ENCODE measurements at regions of chr1 and their contacts with region 1.

Region 1: GRCh38 chr1:40338745-40339424 is 21.8 kb upstream of the COL9A2 start:
- DNase-seq: peak; percentile 79
- H3K4me3 Mint-ChIP-seq: no peak overlapping the region
- H3K27ac Mint-ChIP-seq: no peak overlapping the region
- H3K4me1 Mint-ChIP-seq: peaks cover 6% of the 10 kb centered on the region
- H3K27me3 Mint-ChIP-seq: peaks cover 18% of the 10 kb centered on the region
- CTCF ChIP-seq: peak; percentile 98

Region 2: DNA sequence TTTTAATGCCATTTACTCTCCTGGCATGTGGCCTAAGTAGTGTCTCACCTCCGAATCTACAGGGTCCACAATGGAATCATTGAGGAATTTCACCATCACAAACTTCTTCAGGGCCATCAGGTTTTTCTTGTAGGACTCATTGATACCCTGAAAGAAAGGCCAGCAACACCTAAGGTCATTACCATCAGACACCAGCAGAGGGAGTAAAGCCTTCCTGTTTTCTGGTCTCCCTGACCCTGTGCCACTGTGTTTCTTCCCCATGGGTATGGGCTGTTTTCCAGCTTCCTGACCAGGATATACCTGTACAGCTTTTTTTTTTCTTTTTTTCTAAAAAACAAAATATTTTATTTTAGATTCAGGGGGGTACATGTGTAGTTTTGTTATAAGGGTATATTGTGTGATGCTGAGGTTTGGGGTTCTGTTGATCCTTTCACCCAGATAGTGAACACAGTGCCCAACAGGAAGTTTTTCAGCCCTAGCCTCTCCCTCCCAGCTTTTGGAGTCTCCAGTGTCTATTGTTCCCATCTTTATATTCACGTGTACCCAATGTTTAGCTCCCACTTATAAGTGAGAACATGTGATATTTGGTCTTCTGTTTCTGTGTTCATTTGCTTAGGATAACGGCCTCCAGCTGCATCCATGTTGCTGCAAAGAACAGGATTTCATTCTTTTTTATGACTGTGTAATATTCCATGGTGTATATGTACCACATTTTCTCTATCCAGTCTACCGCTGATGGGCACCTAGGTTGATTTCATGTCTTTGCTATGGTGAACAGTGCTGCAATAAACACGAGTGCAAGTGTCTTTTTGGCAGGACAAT is 260.2 kb before region 1 on chr1:
- CTCF ChIA-PET with region 1: interaction called, 40 read pairs
- POLR2A ChIA-PET with region 1: no interaction called
- intact Hi-C with region 1: no loop called
- DNase-seq: peak; percentile 79
- H3K4me3 Mint-ChIP-seq: no peak overlapping the region
- H3K27ac Mint-ChIP-seq: no peak overlapping the region
- H3K4me1 Mint-ChIP-seq: peaks cover 13% of the 10 kb centered on the region
- H3K27me3 Mint-ChIP-seq: no peaks in the 10 kb centered on the region
- CTCF ChIP-seq: peak; percentile 65

Region 3: GRCh38 chr1:40153073-40153770 is 185.7 kb before region 1 on chr1:
- CTCF ChIA-PET with region 1: interaction called, 182 read pairs
- POLR2A ChIA-PET with region 1: interaction called, 8 read pairs
- intact Hi-C with region 1: loop called (anchors 1 kb)
- DNase-seq: peak; percentile 61
- H3K4me3 Mint-ChIP-seq: no peak overlapping the region
- H3K27ac Mint-ChIP-seq: no peak overlapping the region
- H3K4me1 Mint-ChIP-seq: peaks cover 8% of the 10 kb centered on the region
- H3K27me3 Mint-ChIP-seq: peaks cover 13% of the 10 kb centered on the region
- CTCF ChIP-seq: peak; percentile 57

Region 4: DNA sequence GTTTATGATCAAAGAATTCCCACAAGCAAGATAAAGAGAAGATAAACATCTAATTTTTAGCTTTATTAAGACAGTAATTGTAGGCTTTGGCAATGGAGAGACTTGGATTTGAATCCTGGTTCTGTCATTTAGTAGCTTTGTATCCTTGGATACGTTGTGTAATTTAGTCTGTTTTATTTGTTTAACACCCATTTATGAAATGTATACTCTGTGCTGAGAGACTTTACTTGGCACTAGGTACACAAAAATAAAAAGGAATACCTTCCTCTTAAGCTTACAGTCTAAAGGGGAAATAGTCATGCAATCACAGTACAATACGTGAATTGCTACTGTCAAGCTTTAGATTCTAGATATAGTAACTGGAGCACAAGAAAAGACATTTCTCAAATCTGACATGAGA is 57.0 kb before region 1 on chr1:
- CTCF ChIA-PET with region 1: interaction called, 10 read pairs
- POLR2A ChIA-PET with region 1: no interaction called
- intact Hi-C with region 1: no loop called
- DNase-seq: no peak
- H3K4me3 Mint-ChIP-seq: no peak overlapping the region
- H3K27ac Mint-ChIP-seq: no peak overlapping the region
- H3K4me1 Mint-ChIP-seq: no peaks in the 10 kb centered on the region
- H3K27me3 Mint-ChIP-seq: no peaks in the 10 kb centered on the region
- CTCF ChIP-seq: no peak

Region 5: DNA sequence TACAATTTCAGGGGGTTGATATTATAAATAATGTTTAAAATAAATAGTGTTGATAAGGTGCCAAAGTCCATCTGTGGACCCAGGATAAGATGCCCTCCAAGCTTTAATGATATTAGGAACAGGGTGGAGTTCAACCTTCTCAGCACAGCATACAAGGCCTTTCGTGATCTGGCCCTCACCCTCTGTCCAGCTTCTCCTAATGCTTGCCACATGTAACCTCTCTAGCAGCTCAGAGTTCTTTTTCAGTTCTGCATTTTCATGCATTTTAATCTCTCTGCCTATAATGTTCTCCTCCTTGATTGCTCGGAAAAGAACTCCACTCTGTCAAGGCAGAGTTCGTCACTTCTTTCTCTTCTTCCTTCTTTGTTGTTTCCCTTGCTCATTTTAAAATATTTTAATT is 13.2 kb after region 1 on chr1:
- CTCF ChIA-PET with region 1: interaction called, 23 read pairs
- POLR2A ChIA-PET with region 1: interaction called, 3 read pairs
- intact Hi-C with region 1: no loop called
- DNase-seq: no peak
- H3K4me3 Mint-ChIP-seq: no peak overlapping the region
- H3K27ac Mint-ChIP-seq: no peak overlapping the region
- H3K4me1 Mint-ChIP-seq: no peaks in the 10 kb centered on the region
- H3K27me3 Mint-ChIP-seq: no peaks in the 10 kb centered on the region
- CTCF ChIP-seq: no peak

Region 6: GRCh38 chr1:40385437-40386358 is 46.8 kb after region 1 on chr1:
- CTCF ChIA-PET with region 1: interaction called, 20 read pairs
- POLR2A ChIA-PET with region 1: no interaction called
- intact Hi-C with region 1: no loop called
- DNase-seq: no peak
- H3K4me3 Mint-ChIP-seq: no peak overlapping the region
- H3K27ac Mint-ChIP-seq: peak overlapping the region; percentile 30
- H3K4me1 Mint-ChIP-seq: peaks cover 15% of the 10 kb centered on the region
- H3K27me3 Mint-ChIP-seq: no peaks in the 10 kb centered on the region
- CTCF ChIP-seq: no peak

Region 7: DNA sequence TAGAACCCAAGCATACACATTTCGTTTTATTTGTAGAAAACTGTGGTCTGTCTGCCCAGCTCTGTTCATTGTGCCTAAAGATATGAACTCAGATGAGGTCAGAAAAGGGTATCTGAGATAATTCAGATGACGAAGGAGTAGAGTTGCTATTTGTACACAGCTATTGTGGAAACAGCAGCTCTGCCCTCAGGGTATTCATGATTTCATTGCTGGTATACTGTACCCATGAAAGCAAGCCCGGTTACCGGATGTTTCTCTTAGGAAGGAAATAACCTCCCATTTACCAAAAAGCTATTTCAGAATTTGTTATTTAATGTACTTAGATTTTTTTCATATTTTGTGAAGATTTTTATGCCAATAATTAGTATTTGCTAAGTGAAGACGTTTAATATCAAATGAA is 72.4 kb after region 1 on chr1:
- CTCF ChIA-PET with region 1: interaction called, 18 read pairs
- POLR2A ChIA-PET with region 1: no interaction called
- intact Hi-C with region 1: no loop called
- DNase-seq: no peak
- H3K4me3 Mint-ChIP-seq: no peak overlapping the region
- H3K27ac Mint-ChIP-seq: no peak overlapping the region
- H3K4me1 Mint-ChIP-seq: peaks cover 6% of the 10 kb centered on the region
- H3K27me3 Mint-ChIP-seq: no peaks in the 10 kb centered on the region
- CTCF ChIP-seq: no peak